ENCODE measurements at regions of chr18 and their contacts with region 1.

Region 1: DNA sequence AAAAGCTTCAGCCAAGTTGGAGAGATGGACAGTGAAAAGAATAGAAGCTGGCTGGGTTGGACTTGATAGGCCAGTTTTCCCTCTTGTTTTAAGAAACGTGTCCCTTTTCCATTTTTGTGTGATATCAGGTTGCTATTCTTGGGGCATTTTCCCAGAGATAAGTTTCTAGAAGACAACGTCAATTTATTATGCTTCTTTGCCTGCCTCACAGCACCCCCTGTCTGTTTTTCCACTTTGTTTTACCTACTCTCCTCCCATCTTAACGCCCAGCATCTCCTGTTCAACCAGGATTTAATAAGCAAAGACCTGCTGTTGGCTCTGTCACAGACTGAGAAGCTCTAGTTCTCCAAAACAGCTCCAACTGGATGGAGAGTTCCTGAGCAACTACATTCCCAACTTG is 317.8 kb upstream of the ZNF521 start:
- DNase-seq: no peak
- ATAC-seq: no peak
- H3K4me3 ChIP-seq: no peak overlapping the region
- H3K27ac ChIP-seq: no peak overlapping the region
- H3K4me1 ChIP-seq: peaks cover 0 to 3% (median 0%) of the 10 kb centered on the region in 12 donors
- H3K27me3 ChIP-seq: no peaks in the 10 kb centered on the region
- CTCF ChIP-seq: peak in 7 of 12 donors; percentile 8 to 30 (median 19)
- POLR2A ChIP-seq: no peak

Region 2: GRCh38 chr18:24885276-24885675 is 784.5 kb before region 1 on chr18:
- intact Hi-C with region 1: loop called in 1 of 10 experiments (anchors 10 kb)
- DNase-seq: no peak
- ATAC-seq: no peak
- H3K4me3 ChIP-seq: no peak overlapping the region
- H3K27ac ChIP-seq: no peak overlapping the region
- H3K4me1 ChIP-seq: peaks cover 0 to 4% (median 0%) of the 10 kb centered on the region in 12 donors
- H3K27me3 ChIP-seq: no peaks in the 10 kb centered on the region
- CTCF ChIP-seq: no peak
- POLR2A ChIP-seq: no peak

Region 3: DNA sequence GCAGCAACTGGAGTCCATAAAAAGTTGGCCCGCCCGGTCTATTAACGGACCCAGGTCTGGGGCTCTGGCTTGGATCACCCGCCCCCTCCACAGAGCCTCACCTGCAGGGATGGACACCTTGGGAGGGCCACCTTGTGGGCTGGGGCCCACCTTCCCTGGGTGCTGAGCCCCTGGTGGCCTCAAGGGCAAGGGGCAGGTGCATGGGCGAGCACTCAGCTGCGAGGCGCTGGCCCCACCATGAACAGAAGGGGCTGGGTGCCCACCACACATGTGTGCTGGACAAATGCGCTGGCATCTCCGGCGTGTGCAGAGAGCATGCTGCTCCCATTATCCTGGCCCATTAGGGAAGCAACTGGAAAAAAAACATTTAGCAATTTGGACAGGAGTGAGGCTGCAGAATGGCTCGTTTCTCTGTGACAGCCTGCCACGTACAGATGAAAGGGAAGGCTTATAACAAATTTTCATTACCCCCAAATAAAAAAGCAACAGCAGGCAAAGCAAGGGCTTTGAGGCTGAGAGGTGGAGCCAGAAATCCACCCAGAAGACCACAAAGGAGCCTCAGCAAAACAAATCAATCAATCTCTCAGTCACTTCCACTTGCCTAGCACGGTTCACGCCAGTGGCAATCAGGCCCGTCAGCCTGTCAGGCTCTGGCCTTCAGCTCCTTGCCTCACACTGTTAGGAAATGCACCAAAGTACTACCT is 64.7 kb before region 1 on chr18:
- intact Hi-C with region 1: loop called in 2 of 10 experiments (anchors 10 kb)
- DNase-seq: no peak
- ATAC-seq: no peak
- H3K4me3 ChIP-seq: no peak overlapping the region
- H3K27ac ChIP-seq: no peak overlapping the region
- H3K4me1 ChIP-seq: no peaks in the 10 kb centered on the region
- H3K27me3 ChIP-seq: peaks cover 0 to 4% (median 0%) of the 10 kb centered on the region in 9 donors
- CTCF ChIP-seq: no peak
- POLR2A ChIP-seq: no peak

Region 4: GRCh38 chr18:25614168-25614567 is 55.6 kb before region 1 on chr18:
- intact Hi-C with region 1: loop called in 2 of 10 experiments (anchors 10 kb)
- DNase-seq: no peak
- ATAC-seq: no peak
- H3K4me3 ChIP-seq: no peak overlapping the region
- H3K27ac ChIP-seq: no peak overlapping the region
- H3K4me1 ChIP-seq: no peaks in the 10 kb centered on the region
- H3K27me3 ChIP-seq: no peaks in the 10 kb centered on the region
- CTCF ChIP-seq: peak in 1 of 12 donors; percentile 9
- POLR2A ChIP-seq: no peak

Region 5: GRCh38 chr18:25737710-25738311 is 68.1 kb after region 1 on chr18:
- intact Hi-C with region 1: loop called in 1 of 10 experiments (anchors 10 kb)
- DNase-seq: no peak
- ATAC-seq: peak in 1 of 4 donors; percentile 39
- H3K4me3 ChIP-seq: no peak overlapping the region
- H3K27ac ChIP-seq: no peak overlapping the region
- H3K4me1 ChIP-seq: no peaks in the 10 kb centered on the region
- H3K27me3 ChIP-seq: peaks cover 0 to 9% (median 0%) of the 10 kb centered on the region in 9 donors
- CTCF ChIP-seq: no peak
- POLR2A ChIP-seq: no peak